ENCODE measurements at regions of chr12 and their contacts with region 1.

Region 1: DNA sequence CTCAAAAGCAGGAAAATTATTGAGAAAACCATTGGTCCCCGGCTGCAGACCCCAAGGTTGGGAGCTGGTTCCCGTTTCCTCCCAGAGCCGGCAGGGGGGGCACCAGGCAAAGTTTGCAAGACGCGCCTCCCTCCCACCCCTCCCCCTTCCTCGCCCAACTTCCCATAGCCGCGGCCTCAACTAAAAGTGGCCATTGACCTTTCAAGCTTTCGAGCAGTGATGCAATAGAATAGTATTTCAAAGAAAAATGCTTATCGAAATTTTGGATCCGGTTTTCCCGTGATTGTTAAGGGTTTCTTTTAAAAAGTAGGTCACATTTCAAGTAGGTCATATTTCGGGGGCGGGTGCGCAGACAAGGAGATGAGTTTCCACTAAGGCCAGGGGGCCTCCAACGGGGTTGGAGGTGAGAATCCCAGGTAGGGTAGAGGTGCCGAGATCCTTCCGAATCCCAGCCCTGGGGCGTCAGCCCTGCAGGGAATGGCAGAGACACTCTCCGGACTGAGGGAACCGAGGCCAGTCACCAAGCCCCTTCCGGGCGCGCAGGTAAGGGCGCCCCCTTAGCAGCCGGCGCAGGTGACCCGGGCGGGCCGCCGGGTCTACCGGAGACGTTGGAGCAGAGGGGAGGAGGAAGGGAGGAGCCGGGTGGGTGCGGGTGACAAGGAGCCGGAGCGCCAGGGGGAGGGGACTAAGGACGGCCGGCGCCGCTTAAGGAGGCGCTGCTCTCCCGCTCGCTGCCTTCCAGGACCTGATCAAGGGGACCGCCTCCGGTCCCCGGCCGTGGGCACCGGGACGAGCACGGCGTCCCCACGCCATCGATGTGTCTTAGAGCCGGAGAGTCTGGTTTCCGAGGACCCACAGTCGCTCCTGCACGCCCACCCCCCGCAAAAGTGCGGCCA is 2.6 kb upstream of the SOCS2 start:
- DNase-seq: peak; percentile 83
- H3K4me3 ChIP-seq: peak overlapping the region; percentile 72 to 82
- H3K27ac ChIP-seq: peak overlapping the region; percentile 97 to 98
- H3K4me1 ChIP-seq: no peaks in the 10 kb centered on the region
- H3K27me3 ChIP-seq: no peaks in the 10 kb centered on the region
- CTCF ChIP-seq: peak; percentile 70 to 88 (median 88)
- POLR2A ChIP-seq: peak; percentile 24

Region 2: DNA sequence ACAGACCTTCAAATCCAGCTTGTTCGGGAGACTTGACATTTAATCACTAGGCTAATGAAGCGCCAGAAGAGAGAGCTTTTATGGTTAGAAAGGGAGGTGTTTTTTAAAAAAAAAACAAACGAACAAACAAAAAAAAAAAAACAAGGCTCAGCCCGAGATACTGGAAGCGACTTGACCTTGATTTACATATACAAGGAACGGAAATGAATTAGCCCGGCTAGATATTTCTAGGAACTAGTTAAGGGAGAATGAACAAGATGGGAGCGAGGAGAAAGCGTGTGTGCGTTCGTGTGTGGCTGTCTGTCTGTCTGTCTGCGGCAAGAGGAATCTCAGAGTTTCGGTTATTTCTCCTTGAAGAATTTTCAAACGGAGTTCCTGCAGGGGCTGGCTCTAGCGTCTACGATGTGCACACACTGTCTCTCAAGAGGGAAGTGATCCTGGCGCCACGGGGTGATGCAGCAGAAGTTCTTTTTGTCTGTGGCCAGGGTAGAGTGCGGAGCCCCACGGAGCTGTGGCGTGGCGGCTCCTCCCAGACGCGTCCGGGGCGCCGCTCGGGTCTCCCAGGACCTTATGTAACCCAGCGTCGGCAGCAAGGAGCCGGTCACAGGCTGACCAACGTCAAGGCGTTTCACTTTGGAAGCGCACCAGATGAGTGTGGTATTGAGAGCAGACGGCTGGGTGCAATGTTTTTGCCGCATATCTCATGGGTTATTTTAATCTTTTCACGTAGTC is 21.4 kb after region 1 on chr12:
- intact Hi-C with region 1: loop called (anchors 1 kb)
- DNase-seq: peak; percentile 60
- H3K4me3 ChIP-seq: peak overlapping the region; percentile 34 to 47
- H3K27ac ChIP-seq: peak overlapping the region; percentile 80 to 89
- H3K4me1 ChIP-seq: no peaks in the 10 kb centered on the region
- H3K27me3 ChIP-seq: no peaks in the 10 kb centered on the region
- CTCF ChIP-seq: no peak
- POLR2A ChIP-seq: peak; percentile 32

Region 3: GRCh38 chr12:93677195-93678064 is 107.5 kb after region 1 on chr12 and contains the start of gene CRADD:
- intact Hi-C with region 1: loop called (anchors 5 kb)
- DNase-seq: peak; percentile 84
- H3K4me3 ChIP-seq: peak within 1 kb of the TSS; percentile 51 to 61
- H3K27ac ChIP-seq: peak within 1 kb of the TSS; percentile 97 to 98
- H3K4me1 ChIP-seq: no peaks in the 10 kb centered on the region
- H3K27me3 ChIP-seq: no peaks in the 10 kb centered on the region
- CTCF ChIP-seq: peak in 1 of 4 experiments; percentile 15
- POLR2A ChIP-seq: peak; percentile 55
- total RNA-seq, gene CRADD: 38.9 to 42.4 TPM

Region 4: DNA sequence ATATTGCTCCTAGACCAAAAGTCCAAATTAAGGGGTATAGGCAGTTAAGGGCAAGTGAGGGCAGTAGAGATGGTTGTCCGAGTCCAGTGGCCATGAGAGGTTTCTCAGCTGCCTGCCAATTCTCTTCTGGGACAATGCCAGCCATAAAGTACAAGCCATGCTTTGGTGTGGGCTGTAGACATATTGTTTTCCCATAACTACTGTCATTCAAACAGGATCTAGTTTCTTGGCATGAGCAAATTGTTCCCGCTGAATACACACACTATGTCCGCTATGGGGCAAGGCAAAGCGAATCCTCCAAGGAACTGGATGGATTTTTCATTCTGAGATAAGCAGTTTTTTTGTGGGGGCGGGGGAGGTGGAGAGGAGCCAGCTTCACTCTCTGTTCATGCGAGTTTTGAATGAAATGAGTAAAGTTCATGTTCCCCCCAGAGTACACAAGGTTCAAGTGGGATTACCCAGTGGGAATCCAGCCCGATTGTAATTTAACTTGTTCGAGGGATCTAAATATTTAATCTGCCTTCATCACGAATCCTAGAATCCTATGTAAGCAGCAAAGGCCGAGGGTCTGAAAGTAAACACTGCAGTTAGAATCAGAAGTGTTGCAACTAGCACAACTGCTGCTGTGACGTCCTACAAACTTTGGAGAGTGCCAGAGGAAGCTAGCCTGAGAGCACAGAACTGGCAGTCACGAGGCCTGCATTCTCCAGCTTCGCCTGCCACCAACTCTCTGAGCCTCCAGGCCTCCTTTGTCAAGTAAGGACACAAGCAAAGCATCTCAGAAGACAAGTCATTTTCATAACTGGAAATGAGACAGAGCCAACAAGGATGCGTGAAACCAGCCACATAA is 244.3 kb after region 1 on chr12:
- intact Hi-C with region 1: loop called (anchors 5 kb)
- DNase-seq: peak; percentile 93
- H3K4me3 ChIP-seq: no peak overlapping the region
- H3K27ac ChIP-seq: peak overlapping the region; percentile 84 to 96
- H3K4me1 ChIP-seq: peaks cover 43% of the 10 kb centered on the region
- H3K27me3 ChIP-seq: no peaks in the 10 kb centered on the region
- CTCF ChIP-seq: peak in 1 of 4 experiments; percentile 3
- POLR2A ChIP-seq: no peak

Region 5: GRCh38 chr12:93979189-93979588 is 409.3 kb after region 1 on chr12:
- intact Hi-C with region 1: loop called (anchors 5 kb)
- DNase-seq: peak; percentile 29
- H3K4me3 ChIP-seq: no peak overlapping the region
- H3K27ac ChIP-seq: no peak overlapping the region
- H3K4me1 ChIP-seq: no peaks in the 10 kb centered on the region
- H3K27me3 ChIP-seq: no peaks in the 10 kb centered on the region
- CTCF ChIP-seq: peak in 3 of 4 experiments; percentile 46 to 74 (median 48)
- POLR2A ChIP-seq: no peak

Region 6: GRCh38 chr12:94101738-94102660 is 532.1 kb after region 1 on chr12:
- intact Hi-C with region 1: loop called (anchors 2 kb)
- DNase-seq: peak; percentile 86
- H3K4me3 ChIP-seq: peak overlapping the region; percentile 35 to 59
- H3K27ac ChIP-seq: peak overlapping the region; percentile 49 to 72
- H3K4me1 ChIP-seq: peaks cover 3% of the 10 kb centered on the region
- H3K27me3 ChIP-seq: no peaks in the 10 kb centered on the region
- CTCF ChIP-seq: peak; percentile 60 to 91 (median 86)
- POLR2A ChIP-seq: peak; percentile 12